Endothelial cell of umbilical vein (primary cell): ENCODE measurements at regions of chr2 and their contacts with region 1.

Region 1: GRCh38 chr2:148020111-148021058 is at the start of gene ORC4:
- DNase-seq: peak; percentile 100
- H3K4me3 ChIP-seq: peak within 1 kb of the TSS; percentile 77 to 88 (median 88)
- H3K27ac ChIP-seq: peak within 1 kb of the TSS; percentile 74
- H3K4me1 ChIP-seq: peaks cover 25% of the 10 kb centered on the region
- H3K27me3 ChIP-seq: no peaks in the 10 kb centered on the region
- CTCF ChIP-seq: peak; percentile 28 to 65
- POLR2A ChIP-seq: no peak
- total RNA-seq, gene ORC4: 24.5 and 27.0 TPM in 2 replicates

Region 2: DNA sequence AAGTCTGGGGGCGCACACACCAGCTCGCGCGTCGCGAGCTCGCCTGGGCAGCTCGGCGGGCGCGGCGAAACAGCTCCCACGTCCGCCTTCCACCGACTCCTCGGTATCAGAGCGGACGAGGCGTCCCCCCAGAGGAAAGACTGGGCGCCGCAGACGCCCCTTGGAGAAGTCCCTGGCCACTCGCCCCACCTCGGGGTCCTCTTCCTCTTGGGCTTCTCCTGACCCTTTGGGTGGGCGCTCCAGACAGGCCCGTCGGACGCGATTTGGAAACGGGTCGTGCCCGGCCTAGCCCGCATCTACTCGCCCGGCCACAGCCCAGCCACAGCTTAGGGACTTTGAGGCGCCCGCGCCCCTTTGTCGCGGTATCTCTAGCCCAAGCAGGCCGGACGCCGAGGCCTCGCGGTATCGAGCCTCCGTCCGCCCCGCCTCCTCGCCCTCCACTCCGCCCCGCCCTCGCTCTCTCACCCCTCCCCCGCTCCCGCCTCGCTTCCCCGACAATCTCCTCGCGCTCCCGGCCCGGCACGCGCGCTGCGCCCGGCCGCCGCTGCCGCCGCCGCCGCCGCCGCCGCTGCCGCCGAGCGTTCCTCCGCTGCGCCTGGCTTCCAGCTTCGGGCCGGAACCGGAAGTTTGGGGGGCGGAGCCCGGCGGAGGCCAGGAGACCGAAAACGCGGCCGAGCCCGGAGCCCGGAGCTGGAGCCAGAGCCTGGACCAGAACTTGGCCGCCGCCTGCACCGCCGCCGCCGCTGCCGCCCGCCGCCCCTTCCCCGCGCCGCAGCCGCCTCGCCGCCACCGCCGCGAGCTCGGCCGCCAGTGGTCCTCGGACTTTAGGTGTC is 176.3 kb before region 1 on chr2:
- CTCF ChIA-PET with region 1: no interaction called
- POLR2A ChIA-PET with region 1: no interaction called
- dilution Hi-C with region 1: no loop called
- intact Hi-C with region 1: loop called (anchors 2 kb)
- DNase-seq: peak; percentile 85
- H3K4me3 ChIP-seq: peak overlapping the region; percentile 60 to 95 (median 85)
- H3K27ac ChIP-seq: peak overlapping the region; percentile 70
- H3K4me1 ChIP-seq: peaks cover 20% of the 10 kb centered on the region
- H3K27me3 ChIP-seq: peaks cover 0 to 2% of the 10 kb centered on the region in 2 experiments
- CTCF ChIP-seq: peak in 1 of 2 donors; percentile 23
- POLR2A ChIP-seq: no peak

Region 3: DNA sequence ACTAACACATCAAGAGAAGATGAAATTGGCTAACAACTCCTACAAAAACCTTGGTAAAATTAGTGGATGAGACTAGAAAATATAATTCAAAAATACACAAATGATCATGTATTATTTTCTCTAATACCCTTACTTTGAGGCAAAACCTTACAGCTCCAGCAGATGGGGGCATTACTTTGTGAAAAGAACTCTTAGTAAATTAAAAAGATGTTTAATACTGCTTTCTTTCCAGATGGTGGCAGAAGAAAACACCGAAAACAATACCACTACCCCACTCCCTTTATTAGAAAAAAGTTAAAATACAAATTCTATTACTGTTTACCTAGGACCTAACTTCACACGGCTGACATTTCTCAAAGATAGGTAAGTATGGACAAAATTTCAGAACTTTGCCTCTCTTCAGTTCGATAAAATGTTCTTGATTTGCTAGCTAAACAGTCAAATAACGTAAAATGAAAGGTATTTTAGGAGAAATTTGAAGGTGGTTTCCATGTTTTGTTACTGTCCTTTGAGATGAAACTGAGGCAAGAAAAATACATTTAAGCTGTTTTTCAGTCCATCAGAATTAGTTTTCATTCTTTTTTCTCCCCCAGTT is 30.5 kb before region 1 on chr2:
- CTCF ChIA-PET with region 1: interaction called, 6 read pairs
- POLR2A ChIA-PET with region 1: no interaction called
- dilution Hi-C with region 1: no loop called
- intact Hi-C with region 1: loop called (anchors 1 kb)
- DNase-seq: peak; percentile 66
- H3K4me3 ChIP-seq: no peak overlapping the region
- H3K27ac ChIP-seq: no peak overlapping the region
- H3K4me1 ChIP-seq: no peaks in the 10 kb centered on the region
- H3K27me3 ChIP-seq: no peaks in the 10 kb centered on the region
- CTCF ChIP-seq: peak; percentile 32 to 44
- POLR2A ChIP-seq: no peak

Region 4: GRCh38 chr2:148096012-148096411 is 75.6 kb after region 1 on chr2:
- CTCF ChIA-PET with region 1: interaction called, 6 read pairs
- POLR2A ChIA-PET with region 1: no interaction called
- dilution Hi-C with region 1: no loop called
- intact Hi-C with region 1: loop called (anchors 2 kb)
- DNase-seq: peak; percentile 33
- H3K4me3 ChIP-seq: no peak overlapping the region
- H3K27ac ChIP-seq: no peak overlapping the region
- H3K4me1 ChIP-seq: peaks cover 9% of the 10 kb centered on the region
- H3K27me3 ChIP-seq: no peaks in the 10 kb centered on the region
- CTCF ChIP-seq: no peak
- POLR2A ChIP-seq: no peak

Region 5: GRCh38 chr2:148391324-148391723 is 370.9 kb after region 1 on chr2:
- CTCF ChIA-PET with region 1: no interaction called
- POLR2A ChIA-PET with region 1: no interaction called
- dilution Hi-C with region 1: no loop called
- intact Hi-C with region 1: loop called (anchors 2 kb)
- DNase-seq: peak; percentile 71
- H3K4me3 ChIP-seq: no peak overlapping the region
- H3K27ac ChIP-seq: peak overlapping the region; percentile 34
- H3K4me1 ChIP-seq: peaks cover 14% of the 10 kb centered on the region
- H3K27me3 ChIP-seq: no peaks in the 10 kb centered on the region
- CTCF ChIP-seq: no peak
- POLR2A ChIP-seq: no peak

Region 6: GRCh38 chr2:148848146-148848545 is 827.8 kb after region 1 on chr2:
- CTCF ChIA-PET with region 1: no interaction called
- POLR2A ChIA-PET with region 1: interaction called, 11 read pairs
- dilution Hi-C with region 1: no loop called
- intact Hi-C with region 1: no loop called
- DNase-seq: no peak
- H3K4me3 ChIP-seq: no peak overlapping the region
- H3K27ac ChIP-seq: no peak overlapping the region
- H3K4me1 ChIP-seq: no peaks in the 10 kb centered on the region
- H3K27me3 ChIP-seq: peaks cover 0 to 2% of the 10 kb centered on the region in 2 experiments
- CTCF ChIP-seq: no peak
- POLR2A ChIP-seq: no peak